ENCODE measurements at regions of chr5 and their contacts with region 1.

Region 1: GRCh38 chr5:137778772-137779564 is 24.8 kb upstream of the HNRNPA0 start:
- DNase-seq: no peak
- H3K4me3 ChIP-seq: no peak overlapping the region
- CTCF ChIP-seq: peak; percentile 42

Region 2: GRCh38 chr5:137580030-137580429 is 198.9 kb before region 1 on chr5:
- CTCF ChIA-PET with region 1: no interaction called
- POLR2A ChIA-PET with region 1: no interaction called
- DNase-seq: no peak
- H3K4me3 ChIP-seq: no peak overlapping the region
- CTCF ChIP-seq: no peak

Region 3: DNA sequence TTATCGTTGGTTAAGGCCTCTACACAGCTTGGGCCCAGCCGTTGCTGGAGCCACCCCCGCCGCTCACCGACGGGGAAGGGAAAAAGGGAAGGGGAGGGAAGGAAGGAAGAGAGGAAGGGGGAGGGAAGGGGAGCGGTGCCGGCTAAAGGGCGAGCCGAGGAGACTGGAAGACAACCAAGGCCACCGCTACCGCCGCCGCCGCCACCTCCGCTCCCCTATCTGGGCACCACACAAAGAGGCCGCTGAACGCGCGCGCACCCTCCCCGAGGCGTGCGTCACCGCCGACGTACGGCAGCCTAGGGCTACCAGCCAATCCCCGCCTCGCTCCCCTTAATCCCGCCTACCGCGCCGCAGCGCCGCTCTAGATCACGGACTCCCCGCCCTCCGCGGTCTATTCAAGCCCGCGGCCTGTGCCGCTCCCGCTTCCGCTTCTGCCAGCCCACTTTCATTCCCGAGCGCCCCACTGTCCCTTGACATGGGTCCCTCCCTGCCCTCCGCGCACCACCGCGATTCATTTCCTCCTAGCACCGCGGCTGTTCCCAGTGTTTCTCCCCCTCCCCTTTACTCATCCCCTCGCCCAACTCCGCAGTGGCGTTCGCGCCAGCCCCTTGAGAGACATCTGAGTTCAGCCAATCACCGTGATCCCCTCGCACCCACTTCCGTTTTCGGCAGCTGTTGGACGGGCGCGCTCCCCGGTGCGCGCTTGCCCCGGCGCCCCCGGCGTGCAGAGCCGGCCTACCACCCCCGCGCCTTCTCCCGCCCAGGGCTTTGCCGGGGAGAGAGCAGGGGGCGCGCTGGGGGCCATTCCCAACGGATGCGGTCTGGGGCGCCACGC is 24.6 kb before region 1 on chr5 and contains the start of gene HNRNPA0:
- CTCF ChIA-PET with region 1: interaction called, 19 read pairs
- POLR2A ChIA-PET with region 1: no interaction called
- DNase-seq: peak; percentile 78
- H3K4me3 ChIP-seq: peak within 1 kb of the TSS; percentile 87
- CTCF ChIP-seq: no peak

Region 4: DNA sequence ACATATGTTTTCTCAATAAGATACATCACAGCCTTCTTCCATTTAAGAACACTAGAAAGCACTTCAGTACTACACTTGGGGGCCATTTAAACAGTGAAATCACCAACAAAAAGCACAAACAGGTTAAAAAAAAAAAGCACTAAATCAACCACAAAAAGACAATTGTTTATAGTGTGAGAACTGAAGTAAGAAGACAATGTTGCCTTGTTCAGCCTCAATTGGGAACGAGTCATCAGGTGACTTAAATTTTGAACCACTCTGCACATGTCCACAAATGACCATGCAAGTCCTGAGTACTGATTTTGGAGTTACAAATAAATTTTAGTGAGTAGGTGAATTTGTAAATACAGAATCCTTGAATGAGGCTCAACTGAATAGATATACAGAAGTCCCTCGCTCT is 12.4 kb after region 1 on chr5:
- CTCF ChIA-PET with region 1: interaction called, 19 read pairs
- POLR2A ChIA-PET with region 1: no interaction called
- DNase-seq: no peak
- H3K4me3 ChIP-seq: no peak overlapping the region
- CTCF ChIP-seq: no peak

Region 5: DNA sequence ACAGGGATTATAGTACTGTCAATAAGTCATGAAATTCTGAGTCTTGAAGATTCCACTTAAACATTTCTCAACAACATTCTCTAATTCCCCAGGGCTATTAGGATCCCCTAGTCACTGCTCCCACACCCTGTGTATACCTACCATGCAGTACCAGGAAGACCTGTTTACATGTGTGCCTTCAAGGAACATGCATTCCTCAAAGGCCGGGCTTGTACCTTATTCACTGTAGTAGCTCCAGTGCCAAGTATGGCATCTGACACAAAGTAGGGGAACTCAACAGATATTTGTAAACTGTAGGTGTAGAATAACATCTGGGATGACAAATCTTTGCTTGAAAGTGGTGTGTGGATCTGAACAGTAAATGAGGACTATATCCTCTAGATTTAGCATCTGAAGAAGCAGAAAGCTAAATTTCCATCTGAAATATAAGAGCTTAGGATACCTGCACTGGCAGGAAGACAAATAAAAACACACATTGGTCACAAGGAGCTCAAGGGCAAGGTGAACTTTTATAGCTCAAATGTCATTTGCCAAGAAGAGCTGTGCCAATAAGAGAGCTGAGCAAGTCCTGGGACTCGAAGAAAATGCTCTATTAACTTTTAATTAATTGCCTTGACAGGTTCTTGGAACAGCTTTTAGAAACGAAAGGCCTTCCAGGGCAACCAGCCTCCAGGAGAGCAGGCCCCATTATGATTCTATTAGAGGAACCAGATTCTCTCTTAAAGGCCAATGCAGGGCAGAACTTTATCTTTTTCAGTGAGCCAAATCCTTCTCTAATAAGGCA is 36.4 kb after region 1 on chr5:
- CTCF ChIA-PET with region 1: interaction called, 12 read pairs
- POLR2A ChIA-PET with region 1: no interaction called
- DNase-seq: no peak
- H3K4me3 ChIP-seq: no peak overlapping the region
- CTCF ChIP-seq: no peak

Region 6: DNA sequence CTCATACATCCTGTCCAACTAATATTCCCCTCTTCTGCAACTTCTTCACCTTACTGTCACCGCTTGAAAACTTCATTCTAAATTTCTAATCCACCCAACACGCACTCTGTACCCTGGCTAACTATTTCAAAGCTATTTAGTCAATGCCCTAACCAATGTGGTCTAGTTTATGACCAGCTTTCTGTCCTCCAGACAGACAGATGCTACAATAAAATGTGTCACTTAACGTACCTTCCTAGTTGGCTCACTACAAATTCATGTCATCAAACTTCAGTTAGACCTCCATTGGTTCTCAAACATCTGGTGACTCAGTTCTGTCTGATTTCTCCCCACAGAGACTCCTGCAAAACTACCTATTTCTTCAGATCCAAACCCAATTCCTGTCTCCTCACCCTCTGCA is 196.2 kb after region 1 on chr5:
- CTCF ChIA-PET with region 1: no interaction called
- POLR2A ChIA-PET with region 1: no interaction called
- DNase-seq: no peak
- H3K4me3 ChIP-seq: no peak overlapping the region
- CTCF ChIP-seq: no peak

Region 7: GRCh38 chr5:138035605-138036537 is 256.9 kb after region 1 on chr5:
- CTCF ChIA-PET with region 1: interaction called, 11 read pairs
- POLR2A ChIA-PET with region 1: no interaction called
- DNase-seq: peak; percentile 59
- H3K4me3 ChIP-seq: no peak overlapping the region
- CTCF ChIP-seq: peak; percentile 61

Region 8: DNA sequence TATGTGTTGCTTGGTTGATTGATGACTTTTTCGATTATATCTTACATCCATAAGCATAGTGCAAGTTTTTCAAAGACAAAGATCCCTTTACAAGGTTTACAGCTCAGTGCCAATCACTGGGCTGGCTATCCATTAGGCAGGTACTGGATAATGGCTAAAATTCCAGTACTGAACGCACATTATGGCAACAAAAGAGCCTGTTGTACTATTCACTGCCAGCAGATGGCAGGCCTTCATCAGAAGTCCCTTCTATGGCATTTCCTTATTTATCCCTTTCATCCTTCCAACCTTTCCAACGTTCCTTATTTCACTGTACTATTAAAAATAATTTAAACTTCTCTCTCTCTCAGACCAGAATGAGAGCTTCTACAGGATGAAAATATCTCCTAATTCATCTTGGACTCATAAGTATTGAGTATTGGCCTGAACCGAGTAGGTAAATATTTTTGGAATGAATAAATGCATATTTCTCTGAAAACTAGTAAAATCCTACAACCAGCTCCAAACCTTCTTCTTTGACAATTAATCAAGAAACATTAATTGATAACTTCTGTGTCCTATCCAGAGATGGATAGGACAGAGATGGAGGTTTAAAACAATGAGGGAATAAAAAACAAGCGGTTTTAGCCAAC is 298.2 kb after region 1 on chr5:
- CTCF ChIA-PET with region 1: interaction called, 14 read pairs
- POLR2A ChIA-PET with region 1: no interaction called
- DNase-seq: peak; percentile 5
- H3K4me3 ChIP-seq: no peak overlapping the region
- CTCF ChIP-seq: peak; percentile 70

Region 9: GRCh38 chr5:138138949-138139780 is 360.2 kb after region 1 on chr5 and contains the start of gene NME5:
- CTCF ChIA-PET with region 1: interaction called, 74 read pairs
- POLR2A ChIA-PET with region 1: no interaction called
- DNase-seq: no peak
- H3K4me3 ChIP-seq: peak within 1 kb of the TSS; percentile 49
- CTCF ChIP-seq: no peak

Measured in AG04449 (cell line).